B cell (primary cell): ENCODE measurements at regions of chr14 and their contacts with region 1.

Region 1: GRCh38 chr14:49977126-49977841 is 84.4 kb downstream of the ARF6 start:
- DNase-seq: peak; percentile 80
- ATAC-seq: peak; percentile 85
- H3K4me3 ChIP-seq: peak overlapping the region; percentile 26 to 69 (median 48)
- H3K4me3 Mint-ChIP-seq: peak overlapping the region; percentile 83
- H3K27ac ChIP-seq: peak overlapping the region; percentile 84 to 87
- H3K27ac Mint-ChIP-seq: peak overlapping the region; percentile 90
- H3K4me1 ChIP-seq: peaks cover 85 to 88% of the 10 kb centered on the region in 2 donors
- H3K4me1 Mint-ChIP-seq: peaks cover 80% of the 10 kb centered on the region
- H3K27me3 ChIP-seq: no peaks in the 10 kb centered on the region
- H3K27me3 Mint-ChIP-seq: no peaks in the 10 kb centered on the region
- CTCF ChIP-seq: no peak

Region 2: DNA sequence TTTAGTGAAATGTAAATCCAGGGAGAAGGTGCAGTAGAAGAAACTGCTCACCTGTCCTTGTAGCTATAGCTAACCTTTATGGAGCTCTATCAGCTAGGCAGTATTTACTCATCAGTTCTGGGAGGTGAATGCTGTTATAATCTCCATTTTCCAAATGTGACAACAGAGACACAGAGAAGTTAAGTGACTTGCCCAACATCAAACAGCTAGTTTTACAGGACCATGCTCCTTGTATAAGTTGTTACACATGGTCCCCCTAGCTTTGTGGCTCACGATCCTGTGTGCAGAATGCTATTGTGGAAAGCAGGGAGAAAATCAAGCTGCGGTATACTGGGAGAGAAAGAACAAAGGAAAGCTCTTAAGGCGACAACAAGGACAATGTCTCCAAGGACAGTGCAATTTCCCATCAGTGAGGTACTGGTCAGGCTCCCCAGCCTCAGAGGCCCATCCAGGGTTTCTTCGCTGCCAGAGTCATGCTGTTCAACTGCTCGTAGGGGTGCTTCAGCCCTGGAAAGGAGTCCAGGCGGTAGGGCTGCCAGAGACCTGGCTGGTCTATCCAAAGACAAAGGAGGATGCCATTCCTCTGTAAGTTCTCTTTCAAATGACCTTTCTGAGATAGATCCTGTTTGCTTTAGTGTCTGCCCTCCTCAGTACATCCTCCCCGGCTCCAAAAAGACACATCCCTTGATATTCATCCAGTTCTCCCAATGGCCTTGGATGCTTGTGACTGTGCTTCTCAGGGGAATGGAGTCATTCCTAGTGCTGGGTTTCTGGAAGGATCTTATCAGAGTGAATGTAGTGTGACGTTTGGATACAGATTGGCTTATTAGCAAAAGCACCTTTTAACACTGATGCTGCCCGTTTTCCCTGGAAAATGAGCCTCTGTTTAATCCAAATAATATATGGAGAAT is 11.1 kb after region 1 on chr14:
- CTCF ChIA-PET with region 1: interaction called, 6 read pairs
- POLR2A ChIA-PET with region 1: interaction called, 3 read pairs
- intact Hi-C with region 1: loop called (anchors 1 kb)
- DNase-seq: no peak
- ATAC-seq: no peak
- H3K4me3 ChIP-seq: no peak overlapping the region
- H3K4me3 Mint-ChIP-seq: no peak overlapping the region
- H3K27ac ChIP-seq: no peak overlapping the region
- H3K27ac Mint-ChIP-seq: peak overlapping the region; percentile 59
- H3K4me1 ChIP-seq: peaks cover 8 to 10% of the 10 kb centered on the region in 2 donors
- H3K4me1 Mint-ChIP-seq: peaks cover 26% of the 10 kb centered on the region
- H3K27me3 ChIP-seq: no peaks in the 10 kb centered on the region
- H3K27me3 Mint-ChIP-seq: no peaks in the 10 kb centered on the region
- CTCF ChIP-seq: no peak

Region 3: DNA sequence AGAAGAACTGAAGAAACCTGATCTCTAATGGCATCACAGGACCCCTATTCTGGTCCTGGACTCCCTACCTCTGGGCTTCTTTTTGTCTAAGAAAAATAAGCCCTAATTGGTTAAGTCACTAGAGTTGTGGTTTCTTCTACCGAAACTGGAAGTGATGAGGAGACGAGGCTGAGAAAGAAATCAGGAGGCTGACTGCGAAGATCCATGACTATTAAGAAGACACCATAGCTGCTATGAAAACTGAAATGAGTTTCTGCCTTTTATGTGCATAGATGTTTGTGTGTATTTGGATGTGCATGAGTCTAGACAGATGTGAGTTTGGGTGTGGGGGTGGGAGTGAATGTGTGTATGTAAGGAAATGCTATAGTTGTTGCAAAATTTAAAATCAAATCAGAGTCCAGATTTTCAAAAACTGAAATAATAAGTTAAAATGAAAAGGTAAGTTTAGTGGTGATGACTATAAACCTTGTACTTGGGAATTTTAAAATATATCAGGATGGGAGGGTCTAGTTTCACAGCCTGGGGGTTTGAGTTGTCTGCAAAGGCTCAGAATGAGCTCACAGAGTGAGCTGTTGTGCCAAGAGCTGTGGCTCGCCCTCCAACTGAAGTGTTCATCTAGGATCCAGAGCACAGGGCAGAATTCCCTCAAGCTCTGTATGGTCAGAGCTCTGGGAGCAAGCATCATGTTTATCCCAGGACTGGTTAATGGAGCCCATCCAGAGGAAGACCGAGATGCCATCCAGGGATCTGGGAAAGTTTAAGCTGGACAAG is 44.2 kb after region 1 on chr14:
- CTCF ChIA-PET with region 1: no interaction called
- POLR2A ChIA-PET with region 1: no interaction called
- intact Hi-C with region 1: no loop called
- DNase-seq: no peak
- ATAC-seq: no peak
- H3K4me3 ChIP-seq: no peak overlapping the region
- H3K4me3 Mint-ChIP-seq: peak overlapping the region; percentile 40
- H3K27ac ChIP-seq: no peak overlapping the region
- H3K27ac Mint-ChIP-seq: peak overlapping the region; percentile 5
- H3K4me1 ChIP-seq: peaks cover 9 to 10% of the 10 kb centered on the region in 2 donors
- H3K4me1 Mint-ChIP-seq: peaks cover 21% of the 10 kb centered on the region
- H3K27me3 ChIP-seq: no peaks in the 10 kb centered on the region
- H3K27me3 Mint-ChIP-seq: no peaks in the 10 kb centered on the region
- CTCF ChIP-seq: no peak